ENCODE measurements at regions of chr3 and their contacts with region 1.

Region 1: GRCh38 chr3:197949754-197950660 is at the start of gene RPL35A:
- DNase-seq: peak; percentile 71 to 95 (median 80)
- ATAC-seq: peak; percentile 90
- H3K4me3 ChIP-seq: peak within 1 kb of the TSS; percentile 86
- H3K4me3 Mint-ChIP-seq: peak within 1 kb of the TSS; percentile 97
- H3K27ac ChIP-seq: peak within 1 kb of the TSS; percentile 73 to 99
- H3K27ac Mint-ChIP-seq: peak within 1 kb of the TSS; percentile 98
- H3K4me1 ChIP-seq: peaks cover 37% of the 10 kb centered on the region
- H3K4me1 Mint-ChIP-seq: peaks cover 42% of the 10 kb centered on the region
- H3K27me3 ChIP-seq: no peaks in the 10 kb centered on the region
- H3K27me3 Mint-ChIP-seq: no peaks in the 10 kb centered on the region
- CTCF ChIP-seq: no peak
- total RNA-seq, gene RPL35A: 2,199 to 2,238 TPM

Region 2: GRCh38 chr3:197554562-197555280 is 395.3 kb before region 1 on chr3:
- CTCF ChIA-PET with region 1: no interaction called
- POLR2A ChIA-PET with region 1: no interaction called
- intact Hi-C with region 1: loop called in 1 of 2 experiments (anchors 5 kb)
- DNase-seq: peak; percentile 79 to 95 (median 90)
- ATAC-seq: peak; percentile 93
- H3K4me3 ChIP-seq: peak overlapping the region; percentile 95
- H3K4me3 Mint-ChIP-seq: peak overlapping the region; percentile 96
- H3K27ac ChIP-seq: peak overlapping the region; percentile 81
- H3K27ac Mint-ChIP-seq: peak overlapping the region; percentile 84
- H3K4me1 ChIP-seq: peaks cover 21% of the 10 kb centered on the region
- H3K4me1 Mint-ChIP-seq: peaks cover 31% of the 10 kb centered on the region
- H3K27me3 ChIP-seq: peaks cover 0 to 8% of the 10 kb centered on the region in 2 experiments
- H3K27me3 Mint-ChIP-seq: peaks cover 15% of the 10 kb centered on the region
- CTCF ChIP-seq: peak; percentile 64

Region 3: GRCh38 chr3:197599089-197599765 is 350.8 kb before region 1 on chr3:
- CTCF ChIA-PET with region 1: no interaction called
- POLR2A ChIA-PET with region 1: no interaction called
- intact Hi-C with region 1: no loop called
- DNase-seq: peak; percentile 62 to 88 (median 70)
- ATAC-seq: peak; percentile 98
- H3K4me3 ChIP-seq: no peak overlapping the region
- H3K4me3 Mint-ChIP-seq: no peak overlapping the region
- H3K27ac ChIP-seq: no peak overlapping the region
- H3K27ac Mint-ChIP-seq: no peak overlapping the region
- H3K4me1 ChIP-seq: peaks cover 7% of the 10 kb centered on the region
- H3K4me1 Mint-ChIP-seq: peaks cover 6% of the 10 kb centered on the region
- H3K27me3 ChIP-seq: no peaks in the 10 kb centered on the region
- H3K27me3 Mint-ChIP-seq: no peaks in the 10 kb centered on the region
- CTCF ChIP-seq: peak; percentile 90

Region 4: DNA sequence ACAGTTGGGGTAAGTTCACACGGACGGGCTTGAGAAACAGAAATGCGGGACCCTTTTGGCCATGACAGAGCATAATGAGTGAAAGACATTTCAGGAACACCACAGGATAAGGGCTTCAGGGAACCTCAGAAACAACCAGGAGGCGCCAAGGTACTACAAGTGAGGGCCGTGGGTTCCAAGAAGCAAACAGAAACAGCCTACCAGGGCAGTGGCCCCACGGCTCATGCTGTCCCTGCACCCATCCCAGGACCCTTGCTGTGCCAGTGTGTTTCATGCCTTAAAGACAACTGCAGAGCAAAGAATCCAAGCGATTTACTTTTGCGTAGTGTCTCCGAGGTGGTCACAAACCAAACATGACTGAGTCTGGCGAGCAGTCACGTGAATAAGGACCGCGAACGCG is 267.3 kb before region 1 on chr3:
- CTCF ChIA-PET with region 1: no interaction called
- POLR2A ChIA-PET with region 1: no interaction called
- intact Hi-C with region 1: no loop called
- DNase-seq: peak in 1 of 14 experiments; percentile 14
- ATAC-seq: no peak
- H3K4me3 ChIP-seq: no peak overlapping the region
- H3K4me3 Mint-ChIP-seq: no peak overlapping the region
- H3K27ac ChIP-seq: no peak overlapping the region
- H3K27ac Mint-ChIP-seq: no peak overlapping the region
- H3K4me1 ChIP-seq: no peaks in the 10 kb centered on the region
- H3K4me1 Mint-ChIP-seq: no peaks in the 10 kb centered on the region
- H3K27me3 ChIP-seq: no peaks in the 10 kb centered on the region
- H3K27me3 Mint-ChIP-seq: no peaks in the 10 kb centered on the region
- CTCF ChIP-seq: no peak

Region 5: DNA sequence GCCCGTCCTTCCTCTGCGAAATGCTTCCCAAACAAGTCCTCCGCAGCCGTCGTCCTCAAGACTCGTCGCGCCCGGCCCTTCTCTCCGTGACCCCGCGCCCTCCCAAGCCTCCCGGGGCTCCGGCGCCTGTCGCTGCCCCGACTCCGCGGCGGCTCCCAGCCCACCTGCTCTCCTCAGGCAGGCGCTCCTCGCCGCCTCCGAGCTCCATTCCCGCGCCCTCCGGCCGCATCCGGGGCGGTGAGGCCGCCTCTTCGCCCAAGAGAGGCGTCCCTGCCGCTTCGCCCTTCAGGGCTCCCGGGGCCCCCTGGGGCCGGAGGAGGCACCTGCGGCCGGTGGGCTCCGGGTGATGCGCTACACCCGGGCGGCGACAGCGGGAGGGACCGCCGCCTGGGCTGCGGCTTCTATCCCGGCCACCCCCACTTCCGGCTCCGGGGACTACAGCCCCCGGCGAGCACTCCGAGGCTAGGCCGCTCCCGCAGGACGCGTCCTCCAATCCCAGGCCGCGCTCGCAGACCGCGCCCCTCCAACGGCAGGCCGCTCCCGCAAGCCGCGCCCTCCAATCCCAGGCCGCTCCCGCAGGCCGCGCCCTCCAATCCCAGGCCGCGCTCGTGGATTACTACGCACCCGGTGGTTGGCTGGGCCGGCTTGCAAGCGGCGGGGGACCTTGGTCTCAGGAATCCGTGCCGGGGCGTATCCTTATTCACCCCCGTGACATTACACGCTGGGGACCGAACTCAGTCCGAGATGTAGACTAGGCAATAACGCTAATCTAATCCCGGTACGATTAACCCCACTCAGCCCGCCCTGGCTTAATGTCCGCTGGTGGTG is 213.3 kb before region 1 on chr3 and contains the start of gene RUBCN:
- CTCF ChIA-PET with region 1: no interaction called
- POLR2A ChIA-PET with region 1: no interaction called
- intact Hi-C with region 1: loop called in 1 of 2 experiments (anchors 2 kb)
- DNase-seq: peak; percentile 82 to 98 (median 90)
- ATAC-seq: peak; percentile 95
- H3K4me3 ChIP-seq: peak within 1 kb of the TSS; percentile 78
- H3K4me3 Mint-ChIP-seq: peak within 1 kb of the TSS; percentile 98
- H3K27ac ChIP-seq: peak within 1 kb of the TSS; percentile 68 to 72
- H3K27ac Mint-ChIP-seq: peak within 1 kb of the TSS; percentile 87
- H3K4me1 ChIP-seq: peaks cover 36% of the 10 kb centered on the region
- H3K4me1 Mint-ChIP-seq: peaks cover 36% of the 10 kb centered on the region
- H3K27me3 ChIP-seq: no peaks in the 10 kb centered on the region
- H3K27me3 Mint-ChIP-seq: no peaks in the 10 kb centered on the region
- CTCF ChIP-seq: no peak
- total RNA-seq, gene RUBCN: 35.3 to 38.9 TPM

Region 6: DNA sequence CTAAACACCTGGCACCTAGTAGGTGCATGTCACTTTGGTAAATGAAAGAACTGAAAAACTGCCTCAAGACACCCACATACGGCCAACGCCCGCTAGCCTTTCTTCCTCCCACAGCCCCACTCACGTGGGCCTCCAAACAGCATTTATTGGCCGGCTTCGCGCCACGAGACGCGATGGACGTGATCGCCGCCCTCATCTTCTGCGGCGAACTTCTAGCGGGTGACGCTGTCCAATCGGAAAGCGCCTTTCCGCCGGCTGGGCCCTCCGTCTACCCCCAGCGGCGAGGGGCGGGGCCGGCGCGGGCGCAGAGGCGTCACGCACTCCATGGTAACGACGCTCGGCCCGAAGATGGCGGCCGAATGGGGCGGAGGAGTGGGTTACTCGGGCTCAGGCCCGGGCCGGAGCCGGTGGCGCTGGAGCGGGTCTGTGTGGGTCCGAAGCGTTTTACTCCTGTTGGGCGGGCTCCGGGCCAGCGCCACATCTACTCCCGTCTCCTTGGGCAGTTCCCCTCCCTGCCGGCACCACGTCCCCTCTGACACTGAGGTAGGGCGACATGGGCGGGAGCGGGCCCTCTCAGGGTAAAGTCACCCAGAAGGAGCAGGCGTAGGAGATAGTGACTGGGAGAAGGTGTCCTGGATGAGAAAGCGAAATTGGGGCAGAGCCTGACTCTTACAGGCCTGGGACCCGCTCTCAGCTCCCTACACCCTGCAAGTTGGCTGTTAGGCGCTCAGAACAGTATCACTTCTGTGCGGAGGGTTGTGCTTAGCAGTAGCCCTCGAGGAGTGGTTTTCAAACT is 10.1 kb after region 1 on chr3 and contains the start of gene LMLN:
- CTCF ChIA-PET with region 1: interaction called, 3 read pairs
- POLR2A ChIA-PET with region 1: interaction called, 41 read pairs
- intact Hi-C with region 1: loop called (anchors 1 kb)
- DNase-seq: peak; percentile 89 to 98 (median 94)
- ATAC-seq: peak; percentile 91
- H3K4me3 ChIP-seq: peak within 1 kb of the TSS; percentile 91
- H3K4me3 Mint-ChIP-seq: peak within 1 kb of the TSS; percentile 90
- H3K27ac ChIP-seq: peak within 1 kb of the TSS; percentile 60 to 84
- H3K27ac Mint-ChIP-seq: peak within 1 kb of the TSS; percentile 95
- H3K4me1 ChIP-seq: peaks cover 36% of the 10 kb centered on the region
- H3K4me1 Mint-ChIP-seq: peaks cover 52% of the 10 kb centered on the region
- H3K27me3 ChIP-seq: no peaks in the 10 kb centered on the region
- H3K27me3 Mint-ChIP-seq: no peaks in the 10 kb centered on the region
- CTCF ChIP-seq: no peak
- total RNA-seq, gene LMLN: 3.5 to 3.6 TPM

Measured in CD4-positive, alpha-beta T cell (primary cell).